CD14-positive monocyte (primary cell): ENCODE measurements at regions of chr20 and their contacts with region 1.

Region 1: GRCh38 chr20:50980851-50981713 is 22.5 kb downstream of the MOCS3 start:
- DNase-seq: peak; percentile 40 to 67 (median 63)
- H3K4me3 ChIP-seq: no peak overlapping the region
- H3K4me3 Mint-ChIP-seq: no peak overlapping the region
- H3K27ac ChIP-seq: peak overlapping the region in 1 of 2 donors; percentile 6
- H3K27ac Mint-ChIP-seq: peak overlapping the region; percentile 75 to 90 (median 88)
- H3K4me1 ChIP-seq: peaks cover 3 to 5% of the 10 kb centered on the region in 2 donors
- H3K4me1 Mint-ChIP-seq: peaks cover 31% of the 10 kb centered on the region
- H3K27me3 ChIP-seq: no peaks in the 10 kb centered on the region
- H3K27me3 Mint-ChIP-seq: peaks cover 17 to 26% (median 20%) of the 10 kb centered on the region in 3 donors
- CTCF ChIP-seq: peak; percentile 94

Region 2: GRCh38 chr20:50958615-50959542 is 22.2 kb before region 1 on chr20 and contains the start of gene MOCS3:
- intact Hi-C with region 1: loop called in 1 of 2 experiments (anchors 1 kb)
- DNase-seq: peak; percentile 97 to 99 (median 98)
- H3K4me3 ChIP-seq: peak within 1 kb of the TSS; percentile 75 to 92 (median 87)
- H3K4me3 Mint-ChIP-seq: peak within 1 kb of the TSS; percentile 93 to 98
- H3K27ac ChIP-seq: peak within 1 kb of the TSS; percentile 91 to 95
- H3K27ac Mint-ChIP-seq: peak within 1 kb of the TSS; percentile 98 to 99 (median 99)
- H3K4me1 ChIP-seq: peaks cover 27 to 30% of the 10 kb centered on the region in 2 donors
- H3K4me1 Mint-ChIP-seq: peaks cover 39% of the 10 kb centered on the region
- H3K27me3 ChIP-seq: no peaks in the 10 kb centered on the region
- H3K27me3 Mint-ChIP-seq: peaks cover 0 to 3% (median 0%) of the 10 kb centered on the region in 3 donors
- CTCF ChIP-seq: no peak
- polyA plus RNA-seq, gene MOCS3: 0.48 to 1.9 (median 1.9) TPM